Activated CD4-positive, alpha-beta memory T cell treated with anti-CD3 and anti-CD28 coated beads, Interleukin-2, amount 10 ng/mL, durations not matched to agents 7 days and 5 days (primary cell): ENCODE measurements at regions of chr14 and their contacts with region 1.

Region 1: DNA sequence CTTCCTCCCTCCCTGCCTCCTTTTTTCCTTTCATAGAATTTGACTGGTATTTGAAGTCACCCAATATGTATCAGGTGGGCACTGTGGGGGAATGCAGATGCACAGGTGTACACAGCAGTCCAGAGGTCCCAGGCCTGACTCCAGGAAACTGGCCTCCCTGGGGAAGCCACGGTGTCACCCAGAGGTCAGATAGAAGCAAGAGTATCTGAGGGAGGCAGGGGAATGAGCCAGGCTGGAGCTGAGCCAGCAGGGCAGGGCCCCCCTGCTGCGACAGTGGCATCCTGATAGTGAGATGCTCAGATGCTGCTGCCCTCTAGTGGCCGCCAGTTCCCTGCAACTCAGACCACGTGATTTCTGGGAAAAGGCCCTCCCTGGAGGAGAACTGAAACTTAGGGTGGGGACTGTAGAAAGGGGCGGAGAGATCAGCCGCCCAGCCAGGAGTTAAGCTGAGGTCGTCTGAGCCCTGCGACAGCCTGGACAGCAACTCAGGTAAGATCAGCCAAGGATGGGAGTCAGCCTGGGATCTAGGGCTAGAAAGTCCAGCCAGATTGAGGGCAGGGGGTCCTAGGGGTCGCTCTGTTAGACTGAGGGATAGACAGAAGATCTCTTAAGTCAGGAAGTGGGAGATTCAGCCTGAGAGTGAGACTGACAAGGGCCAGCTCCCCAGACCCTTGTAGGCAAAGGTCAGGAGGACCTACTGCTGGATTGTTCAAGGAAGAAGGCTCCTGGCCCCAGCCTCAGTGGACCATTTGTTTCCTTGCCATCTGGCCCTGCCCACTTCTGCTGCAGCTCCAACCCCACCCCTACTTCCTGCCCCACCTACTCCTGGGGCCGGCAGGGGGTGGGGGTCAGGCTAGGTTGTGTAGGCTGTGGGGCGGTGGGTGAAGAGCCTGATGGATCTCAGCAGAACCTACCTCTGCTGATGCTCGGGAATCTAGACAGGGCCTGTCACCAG is at the start of gene IRF9:
- DNase-seq: peak; percentile 99
- H3K4me3 Mint-ChIP-seq: peak within 1 kb of the TSS; percentile 100
- H3K27ac Mint-ChIP-seq: peak within 1 kb of the TSS; percentile 100
- H3K4me1 Mint-ChIP-seq: peaks cover 56% of the 10 kb centered on the region
- H3K27me3 Mint-ChIP-seq: no peaks in the 10 kb centered on the region
- total RNA-seq, gene IRF9: 262 to 267 TPM

Region 2: DNA sequence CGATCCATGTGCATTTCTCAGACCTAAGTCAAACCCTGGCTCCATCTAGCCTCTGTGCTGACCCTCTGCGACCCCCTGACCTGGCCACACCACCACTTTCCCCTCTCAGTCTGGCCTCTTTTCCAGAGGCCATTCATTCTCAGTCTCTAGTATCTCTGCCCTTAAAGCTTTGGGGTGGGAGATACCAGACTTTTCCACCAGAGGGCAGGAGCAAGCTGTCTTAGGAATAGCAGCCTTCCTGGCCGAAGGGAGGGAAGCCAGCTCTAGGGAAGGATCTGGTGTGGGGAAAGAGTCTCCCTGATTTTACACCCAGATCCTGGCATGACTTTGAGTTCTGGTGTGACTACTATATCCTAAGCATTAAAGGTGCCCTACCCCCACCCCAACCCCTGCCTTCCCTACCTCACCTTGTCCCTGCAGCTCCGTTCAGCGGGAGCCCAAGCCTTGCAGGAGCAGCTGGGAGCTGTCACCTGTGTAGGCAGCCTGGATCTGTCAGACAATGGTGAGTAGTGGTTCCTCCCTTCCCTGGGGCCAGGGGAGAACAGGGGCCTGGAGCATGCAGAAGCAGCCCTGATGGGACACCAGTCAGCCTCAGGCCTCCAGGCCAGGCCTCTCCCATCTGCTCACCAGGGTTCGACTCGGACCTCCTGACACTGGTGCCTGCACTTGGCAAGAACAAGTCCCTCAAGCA is 102.7 kb before region 1 on chr14:
- CTCF ChIA-PET with region 1: interaction called, 26 read pairs
- POLR2A ChIA-PET with region 1: interaction called, 45 read pairs
- DNase-seq: peak; percentile 76
- H3K4me3 Mint-ChIP-seq: no peak overlapping the region
- H3K27ac Mint-ChIP-seq: peak overlapping the region; percentile 38
- H3K4me1 Mint-ChIP-seq: peaks cover 9% of the 10 kb centered on the region
- H3K27me3 Mint-ChIP-seq: peaks cover 8% of the 10 kb centered on the region

Region 3: DNA sequence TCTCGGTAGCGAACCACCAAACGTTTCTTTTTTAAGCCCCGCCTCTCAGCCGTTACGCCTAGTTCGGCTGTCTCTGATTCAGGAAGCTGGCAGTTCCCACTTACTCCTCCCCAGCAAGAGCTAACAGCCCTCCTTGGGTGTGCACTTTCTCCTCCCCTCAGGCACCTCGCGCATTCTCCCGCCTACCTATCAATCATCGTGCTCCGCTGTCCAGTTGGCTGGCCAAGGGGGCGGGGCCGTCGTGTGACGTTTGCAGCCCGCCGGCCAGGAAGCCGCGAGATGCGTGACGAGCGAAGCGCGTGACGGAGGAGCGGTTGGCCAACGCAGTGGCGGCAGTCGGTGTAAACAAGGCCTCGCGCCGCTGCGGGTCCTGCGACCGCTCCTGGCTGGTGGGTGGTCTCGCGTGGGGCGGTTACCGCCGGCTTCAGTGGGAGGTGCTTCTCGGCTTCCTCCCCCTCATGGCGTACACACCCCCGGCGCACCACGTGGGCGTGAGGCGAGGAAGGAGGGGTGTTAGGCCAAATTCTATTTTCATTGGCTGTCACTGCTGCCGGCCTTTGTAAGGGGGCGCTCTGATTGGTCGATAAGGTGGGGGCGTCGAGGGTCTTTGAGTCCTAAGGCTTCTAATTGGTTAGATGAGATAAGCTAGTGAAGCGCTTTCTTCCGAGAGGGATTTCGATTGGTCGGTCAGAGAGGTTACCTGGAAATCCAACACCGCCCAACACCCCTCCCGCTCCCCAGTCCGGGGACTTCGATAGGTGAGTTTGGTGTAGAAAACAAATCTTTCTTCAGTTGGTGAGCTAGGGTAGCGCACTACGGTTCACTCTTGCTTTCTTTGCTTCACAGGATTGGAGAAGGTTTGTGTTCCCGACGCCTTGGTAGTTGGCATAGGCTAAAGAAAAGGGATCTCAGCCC is 46.3 kb before region 1 on chr14 and contains the starts of genes DCAF11 and NRL:
- CTCF ChIA-PET with region 1: interaction called, 35 read pairs
- POLR2A ChIA-PET with region 1: interaction called, 121 read pairs
- DNase-seq: peak; percentile 98
- H3K4me3 Mint-ChIP-seq: peak within 1 kb of the TSS; percentile 98
- H3K27ac Mint-ChIP-seq: peak within 1 kb of the TSS; percentile 100
- H3K4me1 Mint-ChIP-seq: peaks cover 42% of the 10 kb centered on the region
- H3K27me3 Mint-ChIP-seq: no peaks in the 10 kb centered on the region
- total RNA-seq, gene DCAF11: 94.1 to 98.2 TPM
- total RNA-seq, gene NRL: 2.1 to 2.4 TPM

Region 4: GRCh38 chr14:24146978-24147760 is 14.0 kb before region 1 on chr14 and contains the start of gene RNF31:
- CTCF ChIA-PET with region 1: interaction called, 76 read pairs
- POLR2A ChIA-PET with region 1: interaction called, 652 read pairs
- DNase-seq: peak; percentile 99
- H3K4me3 Mint-ChIP-seq: peak within 1 kb of the TSS; percentile 96
- H3K27ac Mint-ChIP-seq: peak within 1 kb of the TSS; percentile 99
- H3K4me1 Mint-ChIP-seq: peaks cover 58% of the 10 kb centered on the region
- H3K27me3 Mint-ChIP-seq: no peaks in the 10 kb centered on the region
- total RNA-seq, gene RNF31: 122 to 129 TPM

Region 5: GRCh38 chr14:24195191-24196070 is 34.3 kb after region 1 on chr14 and contains the start of gene TM9SF1:
- CTCF ChIA-PET with region 1: interaction called, 14 read pairs
- POLR2A ChIA-PET with region 1: interaction called, 456 read pairs
- DNase-seq: peak; percentile 90
- H3K4me3 Mint-ChIP-seq: peak within 1 kb of the TSS; percentile 96
- H3K27ac Mint-ChIP-seq: peak within 1 kb of the TSS; percentile 95
- H3K4me1 Mint-ChIP-seq: peaks cover 64% of the 10 kb centered on the region
- H3K27me3 Mint-ChIP-seq: no peaks in the 10 kb centered on the region
- total RNA-seq, gene TM9SF1: 30.8 to 35.1 TPM

Region 6: GRCh38 chr14:24299255-24300195 is 138.4 kb after region 1 on chr14 and contains the starts of genes DHRS1 and NOP9:
- CTCF ChIA-PET with region 1: interaction called, 4 read pairs
- POLR2A ChIA-PET with region 1: interaction called, 12 read pairs
- DNase-seq: peak; percentile 94
- H3K4me3 Mint-ChIP-seq: peak within 1 kb of the TSS; percentile 84
- H3K27ac Mint-ChIP-seq: peak within 1 kb of the TSS; percentile 84
- H3K4me1 Mint-ChIP-seq: peaks cover 60% of the 10 kb centered on the region
- H3K27me3 Mint-ChIP-seq: no peaks in the 10 kb centered on the region
- total RNA-seq, gene DHRS1: 31.6 to 33.4 TPM
- total RNA-seq, gene NOP9: 25.8 to 27.7 TPM

Region 7: GRCh38 chr14:24695265-24696241 is 534.4 kb after region 1 on chr14:
- CTCF ChIA-PET with region 1: no interaction called
- POLR2A ChIA-PET with region 1: no interaction called
- DNase-seq: peak; percentile 40
- H3K4me3 Mint-ChIP-seq: no peak overlapping the region
- H3K27ac Mint-ChIP-seq: no peak overlapping the region
- H3K4me1 Mint-ChIP-seq: peaks cover 28% of the 10 kb centered on the region
- H3K27me3 Mint-ChIP-seq: no peaks in the 10 kb centered on the region